ENCODE measurements at regions of chr7 and their contacts with region 1.

Region 1: DNA sequence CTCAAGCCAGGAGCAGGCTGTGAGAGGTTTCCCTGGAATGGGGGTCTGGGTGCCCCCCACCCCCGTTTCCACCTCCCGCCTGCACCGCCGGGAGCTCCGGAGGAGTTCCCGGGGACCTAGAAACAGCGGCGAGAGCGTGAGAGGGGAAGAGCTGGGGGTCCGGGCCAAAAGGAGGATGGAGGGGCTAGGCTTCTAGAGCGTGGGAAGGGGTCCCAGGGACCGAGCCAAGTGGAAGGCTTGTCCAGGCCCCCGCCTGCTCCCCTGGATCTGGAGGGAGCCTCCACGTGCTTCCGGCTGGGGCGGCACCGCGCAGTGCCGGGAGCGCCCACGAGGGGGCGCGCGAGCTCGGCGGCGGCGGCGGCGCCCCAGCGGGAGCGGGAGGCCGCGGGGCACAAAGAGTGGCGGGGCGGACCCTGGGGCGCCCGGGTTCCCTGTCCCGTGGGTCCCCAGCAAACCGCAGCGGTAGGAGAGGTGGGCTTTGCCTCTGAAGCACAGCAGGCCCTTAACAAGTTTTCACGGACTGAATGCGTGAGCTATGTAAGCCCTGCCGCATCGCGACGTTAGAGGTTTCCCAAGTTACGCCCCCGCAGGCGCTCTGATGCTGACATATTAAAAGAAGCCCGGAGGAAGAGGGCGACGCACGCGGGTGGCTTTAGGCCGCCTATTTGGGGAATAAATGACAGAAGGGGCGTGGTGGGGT is 104.4 kb upstream of the LRRC4 start:
- DNase-seq: peak; percentile 48 to 81
- ATAC-seq: peak; percentile 94
- H3K4me3 ChIP-seq: peak overlapping the region; percentile 57
- H3K27ac ChIP-seq: peak overlapping the region; percentile 76 to 87; a peak in 5 of 6 replicates
- H3K4me1 ChIP-seq: peaks cover 8% of the 10 kb centered on the region
- CTCF ChIP-seq: peak; percentile 92
- EP300 ChIP-seq: no peak
- POLR2A ChIP-seq: 0 out of 2 replicates have a peak, but pooled peaks have one; percentile 5
- RAD21 ChIP-seq: peak; percentile 49 to 81; a peak in 4 of 5 replicates

Region 2: DNA sequence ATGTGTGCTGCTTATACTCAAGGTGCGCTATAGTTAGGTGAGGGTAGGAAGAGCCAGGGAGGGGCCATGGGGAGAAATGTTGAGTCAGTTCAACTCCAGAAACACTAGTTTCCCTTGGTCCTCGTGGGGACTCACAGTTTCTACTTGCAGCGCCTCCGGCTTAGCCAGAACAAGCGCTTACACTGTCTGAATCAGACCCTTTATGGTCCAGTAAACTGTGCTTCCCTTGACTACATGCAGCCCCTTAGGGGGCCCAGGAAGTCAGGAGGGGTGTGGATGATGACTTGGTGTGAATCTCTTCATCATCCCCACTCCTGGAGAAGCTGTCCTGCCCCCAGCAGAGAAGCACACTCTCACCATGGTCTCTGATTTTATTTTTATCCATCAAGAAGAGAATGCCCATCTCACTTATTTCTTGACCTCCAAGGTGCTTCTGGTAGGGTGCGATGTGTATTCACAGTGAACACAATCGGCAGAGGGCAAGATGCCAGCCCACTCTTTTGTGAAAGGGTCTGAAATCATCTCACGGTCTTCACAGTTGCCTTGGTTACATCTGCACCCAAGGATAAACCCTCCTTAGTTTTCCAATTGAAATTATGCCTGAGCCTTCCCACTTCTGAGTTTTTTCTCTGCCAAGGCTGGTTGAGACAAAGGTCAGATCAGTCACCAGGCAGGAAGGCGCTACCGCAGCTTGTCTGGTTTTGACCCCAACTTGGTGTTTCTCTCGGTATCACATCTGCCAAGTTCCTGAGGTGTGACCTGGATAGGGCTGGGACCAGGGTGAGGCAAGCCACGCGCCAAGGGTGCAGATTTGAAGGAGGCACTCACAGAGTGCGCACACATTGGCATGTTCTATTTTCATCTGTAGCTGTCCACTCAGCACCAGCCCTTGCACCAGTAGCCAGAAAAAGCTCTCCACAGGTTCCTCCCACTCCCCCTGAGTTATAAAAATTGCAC is 41.8 kb before region 1 on chr7:
- CTCF ChIA-PET with region 1: interaction called, 11 read pairs
- POLR2A ChIA-PET with region 1: no interaction called
- DNase-seq: no peak
- ATAC-seq: no peak
- H3K4me3 ChIP-seq: no peak overlapping the region
- H3K27ac ChIP-seq: no peak overlapping the region
- H3K4me1 ChIP-seq: no peaks in the 10 kb centered on the region
- CTCF ChIP-seq: no peak
- EP300 ChIP-seq: no peak
- POLR2A ChIP-seq: no peak
- RAD21 ChIP-seq: no peak

Region 3: DNA sequence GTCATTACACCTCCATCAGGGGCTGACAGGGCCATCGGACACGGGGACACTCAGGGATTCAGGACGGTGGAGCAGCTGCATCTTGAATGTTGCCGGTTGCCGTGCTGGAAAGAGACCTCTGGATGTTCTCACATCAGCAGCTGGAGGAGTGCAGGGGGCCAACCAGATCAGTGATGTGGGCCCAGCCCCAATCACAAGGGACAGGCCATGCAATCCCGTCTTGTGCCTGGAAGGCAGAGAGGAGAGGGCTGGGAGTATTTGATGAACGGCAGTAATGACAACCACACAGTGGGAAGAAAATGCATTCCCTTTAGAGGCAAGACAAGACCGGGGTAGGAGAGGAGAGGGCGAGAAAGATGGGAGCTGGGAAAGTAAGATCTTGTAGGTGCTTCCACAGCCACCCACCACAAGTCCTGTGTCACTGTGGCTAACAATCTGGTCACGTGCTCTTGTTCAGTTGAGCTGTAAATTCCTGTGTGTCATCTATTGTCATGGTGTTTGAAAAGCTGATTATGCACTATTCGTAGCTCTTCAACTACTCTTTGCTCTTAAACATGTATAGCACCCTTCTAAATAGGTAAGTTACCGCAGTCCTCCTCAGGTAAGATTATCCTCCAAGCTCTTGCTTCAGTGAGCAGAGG is 19.6 kb after region 1 on chr7:
- CTCF ChIA-PET with region 1: interaction called, 15 read pairs
- POLR2A ChIA-PET with region 1: no interaction called
- DNase-seq: no peak
- ATAC-seq: no peak
- H3K4me3 ChIP-seq: no peak overlapping the region
- H3K27ac ChIP-seq: no peak overlapping the region
- H3K4me1 ChIP-seq: no peaks in the 10 kb centered on the region
- CTCF ChIP-seq: no peak
- EP300 ChIP-seq: no peak
- POLR2A ChIP-seq: no peak
- RAD21 ChIP-seq: no peak

Region 4: DNA sequence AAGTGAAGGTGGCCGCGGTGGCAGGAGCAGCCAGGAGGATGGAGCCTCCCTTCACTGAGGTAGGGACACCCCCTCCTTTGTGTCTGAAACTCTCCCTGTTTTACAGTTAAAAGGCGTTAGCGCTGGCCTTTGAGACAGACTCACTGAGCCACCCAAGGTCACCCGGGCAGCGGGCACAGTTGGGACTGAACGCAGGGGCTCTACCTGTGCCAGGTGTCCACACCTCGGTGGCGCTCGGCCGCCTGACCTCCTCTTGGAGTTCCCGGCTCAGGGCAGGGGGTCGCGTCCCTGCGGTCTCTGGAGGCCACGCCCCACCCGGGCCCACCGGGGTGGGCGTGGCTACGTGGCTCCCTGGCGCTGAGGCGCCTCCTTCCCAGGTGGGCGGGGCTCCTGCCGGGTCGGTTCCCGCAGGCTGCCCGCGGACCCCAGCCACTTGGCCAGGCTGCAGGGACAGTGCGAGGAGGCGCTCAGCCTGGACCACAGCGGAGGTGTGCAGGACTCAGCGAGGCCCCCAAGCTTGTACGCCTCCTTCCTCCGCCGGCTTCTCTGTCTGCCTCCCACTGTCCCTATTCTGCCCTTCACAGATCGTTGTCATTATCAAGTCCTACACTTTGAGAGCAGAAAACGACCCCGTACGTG is 65.5 kb after region 1 on chr7:
- CTCF ChIA-PET with region 1: interaction called, 202 read pairs
- POLR2A ChIA-PET with region 1: no interaction called
- DNase-seq: no peak
- ATAC-seq: no peak; a peak in 2 of 6 replicates
- H3K4me3 ChIP-seq: no peak overlapping the region
- H3K27ac ChIP-seq: no peak overlapping the region
- H3K4me1 ChIP-seq: no peaks in the 10 kb centered on the region
- CTCF ChIP-seq: no peak
- EP300 ChIP-seq: no peak
- POLR2A ChIP-seq: no peak
- RAD21 ChIP-seq: no peak

Region 5: DNA sequence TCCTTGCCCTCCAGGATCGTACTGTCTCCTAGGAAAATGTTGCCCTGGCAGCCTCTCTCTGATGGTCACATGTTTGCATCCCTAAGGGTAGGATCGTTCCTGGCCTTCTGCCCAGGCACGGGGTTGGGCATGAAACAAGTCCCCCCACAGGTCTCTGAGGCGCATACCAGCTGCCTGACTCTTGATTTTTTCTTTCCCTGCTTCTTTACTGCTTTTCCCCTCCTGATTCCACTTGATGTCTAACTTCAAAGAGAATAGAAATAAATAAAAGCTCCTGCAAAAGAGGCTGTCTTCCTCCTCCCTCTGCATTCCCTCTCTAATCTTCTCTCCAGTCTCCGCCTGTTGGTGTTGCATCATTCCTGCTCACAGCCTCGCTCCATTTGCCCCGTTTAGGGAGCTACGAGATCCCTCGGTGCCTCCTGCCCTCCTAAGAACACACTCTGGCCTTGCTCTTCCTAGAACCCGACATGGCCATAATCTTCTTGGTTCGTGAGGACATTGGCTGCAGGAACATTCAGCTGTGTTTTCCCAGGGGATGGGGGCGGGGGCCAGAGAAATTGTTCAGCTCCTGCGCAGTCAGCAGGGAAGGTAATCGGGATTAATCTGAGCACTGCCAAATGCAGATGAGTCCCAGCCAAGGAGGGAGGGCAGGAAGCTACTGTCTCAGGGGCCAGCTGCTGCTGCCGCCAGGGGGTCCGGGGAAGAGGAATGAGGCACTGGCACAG is 131.4 kb after region 1 on chr7:
- CTCF ChIA-PET with region 1: no interaction called
- POLR2A ChIA-PET with region 1: no interaction called
- DNase-seq: no peak
- ATAC-seq: peak in 1 of 2 experiments; percentile 25; a peak in 2 of 6 replicates
- H3K4me3 ChIP-seq: no peak overlapping the region
- H3K27ac ChIP-seq: peak overlapping the region; percentile 24 to 62; a peak in 4 of 6 replicates
- H3K4me1 ChIP-seq: peaks cover 11% of the 10 kb centered on the region
- CTCF ChIP-seq: no peak
- EP300 ChIP-seq: no peak
- POLR2A ChIP-seq: no peak
- RAD21 ChIP-seq: no peak

Region 6: GRCh38 chr7:128425850-128426249 is 290.2 kb after region 1 on chr7:
- CTCF ChIA-PET with region 1: no interaction called
- POLR2A ChIA-PET with region 1: no interaction called
- DNase-seq: peak; percentile 67 to 89
- ATAC-seq: peak; percentile 62 to 71; a peak in 5 of 6 replicates
- H3K4me3 ChIP-seq: no peak overlapping the region
- H3K27ac ChIP-seq: no peak overlapping the region
- H3K4me1 ChIP-seq: peaks cover 20% of the 10 kb centered on the region
- CTCF ChIP-seq: peak; percentile 88
- EP300 ChIP-seq: no peak
- POLR2A ChIP-seq: no peak
- RAD21 ChIP-seq: peak; percentile 81 to 91

Measured in A549 (cell line).